WTC11 (cell line): ENCODE measurements at regions of chr14 and their contacts with region 1.

Region 1: GRCh38 chr14:21525962-21526671 is at the start of gene SALL2:
- DNase-seq: peak; percentile 97
- ATAC-seq: peak; percentile 76
- H3K4me3 Mint-ChIP-seq: peak within 1 kb of the TSS; percentile 97
- H3K27ac Mint-ChIP-seq: peak within 1 kb of the TSS; percentile 99
- H3K4me1 Mint-ChIP-seq: peaks cover 82% of the 10 kb centered on the region
- H3K27me3 Mint-ChIP-seq: no peaks in the 10 kb centered on the region
- CTCF ChIP-seq: no peak
- total RNA-seq, gene SALL2: 239 to 307 TPM (median 288 TPM) in 3 replicates

Region 2: DNA sequence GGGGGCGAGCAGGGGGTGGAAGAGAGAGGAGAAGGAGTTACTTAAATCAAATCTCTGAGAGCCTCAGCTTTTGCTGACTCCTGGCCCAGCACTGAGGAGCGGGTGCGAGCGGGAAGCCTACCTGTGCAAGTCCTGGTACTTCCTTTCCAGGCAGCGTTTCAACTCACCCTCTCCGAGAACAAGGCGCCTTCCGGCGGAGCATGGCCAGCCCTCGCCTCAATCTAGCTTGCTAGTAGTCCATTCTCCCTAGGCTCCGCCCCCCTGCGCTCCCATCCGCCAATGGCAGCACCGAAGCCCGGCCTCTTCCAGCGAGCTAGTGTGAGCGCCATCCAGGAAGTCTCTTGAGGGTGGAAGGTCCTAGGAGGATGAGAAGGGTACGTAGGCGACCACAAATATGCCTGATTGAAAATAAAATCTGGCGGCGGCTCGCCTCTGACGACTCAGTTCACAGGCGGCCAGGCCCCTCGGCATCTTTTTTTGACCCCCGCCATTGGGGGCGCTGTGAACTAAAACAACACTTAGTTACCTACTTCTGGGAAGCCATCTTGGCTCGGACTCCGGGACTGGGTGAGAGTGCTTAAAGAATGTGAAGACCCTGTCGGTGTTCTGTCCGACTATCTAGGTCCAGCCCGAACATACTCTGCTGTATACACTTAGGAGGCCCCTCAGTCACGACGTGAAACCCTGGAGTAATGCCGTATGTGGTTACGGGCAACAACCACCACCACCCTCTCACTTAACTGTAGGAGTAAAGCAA is 70.0 kb before region 1 on chr14 and contains the start of gene CHD8:
- CTCF ChIA-PET with region 1: interaction called, 16 read pairs
- POLR2A ChIA-PET with region 1: interaction called, 8 read pairs
- DNase-seq: peak; percentile 100
- ATAC-seq: peak; percentile 99
- H3K4me3 Mint-ChIP-seq: peak within 1 kb of the TSS; percentile 94
- H3K27ac Mint-ChIP-seq: peak within 1 kb of the TSS; percentile 100
- H3K4me1 Mint-ChIP-seq: peaks cover 23% of the 10 kb centered on the region
- H3K27me3 Mint-ChIP-seq: no peaks in the 10 kb centered on the region
- CTCF ChIP-seq: peak; percentile 51; the same call in 1 of the 2 replicates
- total RNA-seq, gene CHD8: 119 to 133 TPM (median 119 TPM) in 3 replicates

Region 3: DNA sequence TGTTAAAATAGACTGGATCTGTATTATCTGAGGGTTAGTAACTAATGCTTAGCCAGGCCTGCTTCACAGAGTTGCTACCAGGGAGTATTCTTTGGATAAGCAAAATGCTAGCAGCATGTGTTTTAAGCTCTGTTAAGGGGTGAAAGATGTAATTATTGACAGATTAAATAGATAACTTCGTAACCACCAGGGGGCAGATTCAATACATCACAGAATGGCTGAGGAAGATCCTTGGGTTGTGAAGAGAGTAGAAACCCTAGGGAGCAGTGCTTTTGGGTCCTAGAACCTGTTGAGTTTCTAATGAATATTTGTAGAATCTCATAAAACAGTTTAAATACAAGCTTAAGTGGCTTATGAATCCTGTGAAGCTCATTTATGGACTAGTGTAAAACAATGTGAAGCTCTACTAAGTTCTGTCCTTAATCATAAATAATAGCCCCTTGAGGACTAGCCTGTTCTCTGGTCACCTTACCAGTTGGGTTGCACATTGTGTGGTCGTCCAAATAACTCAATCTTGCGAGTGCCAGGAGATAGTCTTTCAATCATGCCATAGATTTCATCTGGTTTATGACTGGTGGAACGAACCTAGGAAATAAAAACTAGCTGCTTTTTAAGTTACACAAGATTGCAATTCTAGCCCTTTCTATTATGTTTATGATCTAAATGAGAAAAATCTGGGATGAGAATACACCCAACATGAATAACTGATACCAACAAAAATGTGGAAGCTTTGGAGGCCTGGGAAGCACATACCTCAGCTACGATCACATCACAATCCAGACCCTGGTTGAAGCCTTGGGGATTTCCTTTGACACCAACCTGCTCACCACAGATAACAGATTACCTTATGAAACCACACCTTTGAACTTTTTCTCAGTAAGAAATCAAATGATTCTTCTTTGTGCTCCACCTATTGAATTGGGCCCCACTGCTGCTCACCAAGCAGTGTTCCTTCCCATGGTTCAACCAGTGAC is 27.3 kb before region 1 on chr14:
- CTCF ChIA-PET with region 1: interaction called, 23 read pairs
- POLR2A ChIA-PET with region 1: interaction called, 13 read pairs
- DNase-seq: no peak
- ATAC-seq: peak; percentile 65
- H3K4me3 Mint-ChIP-seq: no peak overlapping the region
- H3K27ac Mint-ChIP-seq: peak overlapping the region; percentile 59
- H3K4me1 Mint-ChIP-seq: peaks cover 29% of the 10 kb centered on the region
- H3K27me3 Mint-ChIP-seq: no peaks in the 10 kb centered on the region
- CTCF ChIP-seq: no peak

Region 4: DNA sequence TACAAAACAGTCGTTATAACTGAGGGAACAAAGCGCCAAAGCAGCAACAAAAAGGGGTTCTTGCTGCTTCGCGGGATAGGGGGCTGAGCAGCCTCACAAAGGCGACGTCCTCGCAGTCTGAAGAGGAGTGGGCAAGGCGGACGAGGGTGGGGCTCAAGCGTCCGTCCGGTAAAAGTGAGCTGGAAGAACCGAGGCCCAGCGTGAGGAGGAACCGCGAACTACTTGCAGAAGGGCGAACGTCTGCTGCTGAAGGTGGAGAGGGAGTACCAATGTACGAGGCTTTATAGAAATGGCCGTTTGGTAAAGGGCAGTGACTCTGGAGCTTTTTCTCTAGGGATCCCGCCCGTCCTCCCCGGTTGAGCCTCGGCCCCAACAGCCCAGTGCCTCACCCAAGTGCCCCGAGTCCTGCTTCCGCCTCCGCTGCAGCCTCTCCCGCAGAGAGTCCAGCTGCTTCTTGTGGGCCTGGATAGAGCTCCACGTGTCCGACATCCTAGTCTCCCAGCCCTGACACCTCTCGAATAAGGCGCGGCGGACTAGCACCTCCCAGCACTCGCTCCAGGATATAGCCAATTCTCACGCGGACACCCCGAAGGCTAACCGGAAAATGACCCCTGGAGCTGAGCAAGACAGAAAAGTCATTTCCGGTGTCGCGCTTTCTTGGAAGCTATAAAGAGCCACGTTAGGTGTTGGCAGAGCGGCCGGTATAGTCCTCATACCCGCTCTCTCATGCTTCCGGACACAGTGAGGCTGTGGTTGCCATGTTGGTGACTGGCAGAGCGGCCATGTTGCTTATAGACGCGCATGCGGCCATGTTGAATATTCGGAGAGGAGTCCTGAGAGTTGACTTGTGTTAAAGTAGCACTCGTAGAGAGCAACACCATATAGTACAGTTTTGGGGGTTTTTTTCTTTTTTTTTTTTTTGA is 15.1 kb before region 1 on chr14 and contains the start of gene METTL3:
- CTCF ChIA-PET with region 1: interaction called, 21 read pairs
- POLR2A ChIA-PET with region 1: interaction called, 52 read pairs
- DNase-seq: peak; percentile 93
- ATAC-seq: peak; percentile 98
- H3K4me3 Mint-ChIP-seq: peak within 1 kb of the TSS; percentile 96
- H3K27ac Mint-ChIP-seq: peak within 1 kb of the TSS; percentile 94
- H3K4me1 Mint-ChIP-seq: peaks cover 42% of the 10 kb centered on the region
- H3K27me3 Mint-ChIP-seq: no peaks in the 10 kb centered on the region
- CTCF ChIP-seq: no peak
- total RNA-seq, gene METTL3: 87.2 to 93.2 TPM (median 89.5 TPM) in 3 replicates

Region 5: DNA sequence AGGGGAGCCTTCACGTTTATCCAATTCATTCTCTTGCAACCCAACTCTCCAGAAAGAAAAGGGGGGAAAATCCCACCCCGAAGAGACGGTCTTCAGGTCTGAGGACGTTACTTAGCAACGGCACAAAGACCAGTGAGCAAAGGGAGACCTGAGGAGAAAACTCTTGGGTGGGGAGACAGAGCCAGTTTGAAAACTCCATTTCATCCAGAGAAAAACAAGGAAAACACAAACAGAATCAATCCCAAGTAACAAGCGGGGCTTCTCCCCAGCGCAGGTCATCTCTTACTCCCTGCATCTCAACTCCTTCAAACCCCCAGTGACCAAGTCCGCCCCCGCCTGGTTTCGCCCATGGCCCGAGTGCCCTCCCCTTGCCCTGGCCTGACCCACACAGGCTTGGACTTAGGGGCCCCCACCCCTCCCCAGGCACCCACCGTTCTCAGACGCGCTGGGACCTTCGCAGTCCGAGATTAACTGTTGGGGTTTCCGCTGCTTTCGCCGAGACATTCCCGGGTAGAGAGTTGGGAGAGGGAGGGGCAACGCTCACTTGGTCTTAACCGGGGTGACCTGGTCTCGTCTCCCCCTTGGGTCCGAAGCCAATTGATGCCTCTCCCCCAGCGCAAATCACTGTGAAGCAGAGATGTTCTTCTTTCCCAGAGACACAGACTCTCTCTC is 10.4 kb after region 1 on chr14:
- CTCF ChIA-PET with region 1: interaction called, 32 read pairs
- POLR2A ChIA-PET with region 1: interaction called, 76 read pairs
- DNase-seq: peak; percentile 66
- ATAC-seq: peak; percentile 35
- H3K4me3 Mint-ChIP-seq: peak overlapping the region; percentile 90
- H3K27ac Mint-ChIP-seq: peak overlapping the region; percentile 100
- H3K4me1 Mint-ChIP-seq: peaks cover 51% of the 10 kb centered on the region
- H3K27me3 Mint-ChIP-seq: no peaks in the 10 kb centered on the region
- CTCF ChIP-seq: no peak

Region 6: GRCh38 chr14:21543521-21543960 is 17.4 kb after region 1 on chr14:
- CTCF ChIA-PET with region 1: interaction called, 32 read pairs
- POLR2A ChIA-PET with region 1: interaction called, 30 read pairs
- DNase-seq: no peak
- ATAC-seq: peak; percentile 86
- H3K4me3 Mint-ChIP-seq: peak overlapping the region; percentile 63
- H3K27ac Mint-ChIP-seq: peak overlapping the region; percentile 87
- H3K4me1 Mint-ChIP-seq: peaks cover 49% of the 10 kb centered on the region
- H3K27me3 Mint-ChIP-seq: no peaks in the 10 kb centered on the region
- CTCF ChIP-seq: no peak

Region 7: GRCh38 chr14:21557084-21557901 is 31.2 kb after region 1 on chr14:
- CTCF ChIA-PET with region 1: interaction called, 60 read pairs
- POLR2A ChIA-PET with region 1: interaction called, 56 read pairs
- DNase-seq: peak; percentile 86
- ATAC-seq: peak; percentile 89
- H3K4me3 Mint-ChIP-seq: peak overlapping the region; percentile 51
- H3K27ac Mint-ChIP-seq: peak overlapping the region; percentile 99
- H3K4me1 Mint-ChIP-seq: peaks cover 47% of the 10 kb centered on the region
- H3K27me3 Mint-ChIP-seq: no peaks in the 10 kb centered on the region
- CTCF ChIP-seq: peak; percentile 74